OCI-LY7 (cell line): ENCODE measurements at regions of chr6 and their contacts with region 1.

Region 1: DNA sequence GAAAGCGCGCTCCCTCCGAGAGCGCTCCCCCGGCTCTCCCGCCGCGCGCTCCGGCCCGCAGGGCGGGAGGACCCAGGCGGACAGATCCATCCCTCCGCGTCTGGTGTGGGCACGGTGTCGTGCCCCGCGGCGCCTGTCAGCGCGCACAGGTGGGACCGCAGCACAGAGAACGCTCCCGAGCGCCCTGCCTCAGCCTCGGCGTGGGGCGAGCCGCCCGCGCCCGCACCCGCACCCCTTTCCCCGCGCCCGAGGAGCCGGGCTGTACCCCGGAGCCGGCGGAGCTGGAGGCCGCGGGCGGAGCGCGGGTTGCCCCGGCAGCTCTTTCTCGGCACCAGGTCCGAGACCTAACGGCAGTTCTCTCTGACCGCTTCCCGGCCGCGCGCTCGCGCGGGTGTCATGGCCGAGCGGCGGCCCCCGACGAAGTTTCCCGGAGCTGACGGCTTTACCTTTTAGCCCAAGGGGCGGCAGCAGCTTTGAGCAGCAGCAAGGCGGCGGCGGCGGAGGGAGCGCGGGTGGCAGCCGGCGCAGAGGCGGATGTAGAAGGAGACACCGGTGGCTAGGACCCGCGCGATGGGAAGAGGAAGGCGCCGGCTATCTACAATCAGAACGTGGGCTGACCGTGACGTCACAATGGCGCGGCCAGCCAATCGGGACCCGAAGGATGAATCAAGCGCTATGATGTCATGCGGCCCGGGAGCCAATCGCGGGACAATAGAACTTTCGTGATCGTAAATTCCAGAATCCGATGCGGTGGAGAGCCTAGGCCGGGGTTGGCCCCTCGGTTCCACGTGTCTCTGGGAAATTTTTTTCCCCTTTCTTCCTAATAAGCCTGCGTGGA is at the start of gene ELOVL5:
- DNase-seq: peak; percentile 96
- H3K4me3 ChIP-seq: peak within 1 kb of the TSS; percentile 88
- H3K27ac ChIP-seq: peak within 1 kb of the TSS; percentile 87
- H3K4me1 ChIP-seq: peaks cover 37% of the 10 kb centered on the region
- CTCF ChIP-seq: 0 out of 2 replicates have a peak, but pooled peaks have one; percentile 25
- total RNA-seq, gene ELOVL5: 65.4 and 66.8 TPM in 2 replicates

Region 2: GRCh38 chr6:53244958-53245357 is 103.6 kb before region 1 on chr6:
- CTCF ChIA-PET with region 1: no interaction called
- POLR2A ChIA-PET with region 1: interaction called, 3 read pairs
- intact Hi-C with region 1: loop called (anchors 5 kb)
- DNase-seq: peak; percentile 94
- H3K4me3 ChIP-seq: peak overlapping the region; percentile 24
- H3K27ac ChIP-seq: peak overlapping the region; percentile 61
- H3K4me1 ChIP-seq: peaks cover 40% of the 10 kb centered on the region
- CTCF ChIP-seq: no peak

Region 3: GRCh38 chr6:53309059-53309900 is 39.3 kb before region 1 on chr6:
- CTCF ChIA-PET with region 1: interaction called, 5 read pairs
- POLR2A ChIA-PET with region 1: interaction called, 16 read pairs
- intact Hi-C with region 1: loop called (anchors 1 kb)
- DNase-seq: peak; percentile 95
- H3K4me3 ChIP-seq: peak overlapping the region; percentile 61
- H3K27ac ChIP-seq: peak overlapping the region; percentile 99
- H3K4me1 ChIP-seq: peaks cover 80% of the 10 kb centered on the region
- CTCF ChIP-seq: no peak

Region 4: GRCh38 chr6:53335208-53335994 is 13.2 kb before region 1 on chr6:
- CTCF ChIA-PET with region 1: interaction called, 5 read pairs
- POLR2A ChIA-PET with region 1: interaction called, 27 read pairs
- intact Hi-C with region 1: no loop called
- DNase-seq: peak; percentile 93
- H3K4me3 ChIP-seq: peak overlapping the region; percentile 67
- H3K27ac ChIP-seq: peak overlapping the region; percentile 94
- H3K4me1 ChIP-seq: peaks cover 75% of the 10 kb centered on the region
- CTCF ChIP-seq: no peak

Region 5: DNA sequence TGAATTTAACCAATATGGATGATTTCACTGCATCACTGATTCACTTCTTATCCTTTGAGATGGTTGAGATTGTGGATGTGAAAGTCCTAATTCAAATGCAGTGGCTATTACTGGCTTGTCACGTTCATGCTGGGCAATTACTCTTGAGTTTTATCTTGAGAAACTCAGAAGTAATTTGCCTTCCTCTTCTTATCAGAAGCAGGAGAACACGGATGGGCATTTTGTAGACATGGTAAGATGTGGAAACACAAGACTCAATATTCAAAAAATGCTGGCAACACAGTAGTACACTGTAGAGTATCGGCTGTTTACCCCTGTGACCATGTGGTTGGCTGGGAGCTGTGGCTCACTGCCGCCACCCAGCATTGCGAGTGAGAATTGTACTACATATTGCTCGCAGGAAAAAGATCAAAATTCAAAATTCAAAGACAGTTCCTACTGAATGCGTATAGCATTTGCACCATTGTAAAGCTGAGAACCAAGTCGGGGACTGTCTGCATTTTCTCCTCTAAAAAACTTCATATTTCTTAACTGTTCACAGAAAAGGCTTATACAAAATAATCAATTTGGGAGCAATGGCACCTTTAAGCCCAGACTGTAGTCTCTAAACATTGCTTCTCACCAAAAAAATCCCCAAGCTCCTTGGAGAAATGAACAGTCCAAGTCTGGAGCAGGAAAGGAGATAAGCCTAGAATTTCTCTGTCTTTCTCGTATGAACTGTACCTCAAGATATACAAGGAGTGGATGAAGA is 62.1 kb after region 1 on chr6:
- CTCF ChIA-PET with region 1: interaction called, 5 read pairs
- POLR2A ChIA-PET with region 1: interaction called, 5 read pairs
- intact Hi-C with region 1: loop called (anchors 1 kb)
- DNase-seq: peak; percentile 80
- H3K4me3 ChIP-seq: peak overlapping the region; percentile 19
- H3K27ac ChIP-seq: peak overlapping the region; percentile 39
- H3K4me1 ChIP-seq: peaks cover 17% of the 10 kb centered on the region
- CTCF ChIP-seq: peak; percentile 99